Activated CD8-positive, alpha-beta T cell treated with anti-CD3 and anti-CD28 coated beads, Interleukin-2, amount 10 ng/mL, durations not matched to agents 7 days and 5 days (primary cell): ENCODE measurements at regions of chr6 and their contacts with region 1.

Region 1: DNA sequence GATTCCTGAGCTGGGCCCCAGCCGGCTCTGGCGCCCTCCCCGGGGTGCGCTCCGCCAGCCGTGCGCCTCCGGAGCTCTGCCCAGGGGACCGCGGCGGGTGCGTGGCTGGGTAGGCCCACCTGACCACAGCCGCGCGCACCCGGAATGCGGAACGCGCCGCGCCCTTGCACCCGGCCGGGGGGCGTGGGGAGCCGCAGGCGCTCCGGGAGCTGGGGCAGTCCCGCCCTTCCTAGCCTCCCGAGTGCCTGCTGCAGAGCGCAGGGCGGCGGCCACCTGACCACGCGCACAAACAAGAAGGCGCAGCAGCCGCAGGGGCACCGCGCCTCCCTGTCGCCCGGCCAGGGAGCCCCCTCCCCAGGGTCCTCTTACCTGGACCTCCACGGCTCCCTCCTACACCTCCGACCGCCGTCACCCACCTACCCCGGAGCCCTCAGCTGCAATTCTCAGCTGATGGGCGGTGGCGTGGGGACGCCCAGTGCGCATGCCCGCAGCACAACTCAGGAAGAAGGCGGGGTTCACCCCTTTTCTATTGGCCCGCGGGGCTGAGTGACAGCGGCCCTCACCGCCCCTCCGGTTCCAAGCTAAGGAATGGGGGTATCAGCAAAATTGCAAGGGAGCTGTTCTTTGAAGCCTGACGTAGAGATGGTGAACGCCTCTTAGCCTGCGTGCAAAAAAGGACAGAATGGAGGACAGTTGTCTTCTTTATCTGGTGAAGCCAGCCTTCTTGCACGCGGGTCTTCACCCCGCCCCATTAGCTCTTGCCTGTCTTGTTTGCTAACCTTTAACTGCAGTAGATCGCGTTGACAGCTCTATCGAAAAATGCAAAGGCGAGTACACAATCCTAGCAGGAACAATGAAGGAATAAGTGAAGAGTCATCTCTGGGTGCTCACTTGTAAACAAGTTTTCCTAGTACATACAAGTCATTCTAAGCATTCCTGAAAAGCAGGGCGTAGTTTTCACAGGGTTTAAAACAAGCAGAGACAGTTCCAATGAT is at the start of gene STX7:
- DNase-seq: peak; percentile 89
- ATAC-seq: peak; percentile 97
- H3K4me3 Mint-ChIP-seq: peak within 1 kb of the TSS; percentile 94
- H3K27ac Mint-ChIP-seq: peak within 1 kb of the TSS; percentile 89
- H3K4me1 Mint-ChIP-seq: peaks cover 25% of the 10 kb centered on the region
- H3K27me3 Mint-ChIP-seq: peaks cover 15% of the 10 kb centered on the region
- total RNA-seq, gene STX7: 16.0 to 16.4 TPM

Region 2: DNA sequence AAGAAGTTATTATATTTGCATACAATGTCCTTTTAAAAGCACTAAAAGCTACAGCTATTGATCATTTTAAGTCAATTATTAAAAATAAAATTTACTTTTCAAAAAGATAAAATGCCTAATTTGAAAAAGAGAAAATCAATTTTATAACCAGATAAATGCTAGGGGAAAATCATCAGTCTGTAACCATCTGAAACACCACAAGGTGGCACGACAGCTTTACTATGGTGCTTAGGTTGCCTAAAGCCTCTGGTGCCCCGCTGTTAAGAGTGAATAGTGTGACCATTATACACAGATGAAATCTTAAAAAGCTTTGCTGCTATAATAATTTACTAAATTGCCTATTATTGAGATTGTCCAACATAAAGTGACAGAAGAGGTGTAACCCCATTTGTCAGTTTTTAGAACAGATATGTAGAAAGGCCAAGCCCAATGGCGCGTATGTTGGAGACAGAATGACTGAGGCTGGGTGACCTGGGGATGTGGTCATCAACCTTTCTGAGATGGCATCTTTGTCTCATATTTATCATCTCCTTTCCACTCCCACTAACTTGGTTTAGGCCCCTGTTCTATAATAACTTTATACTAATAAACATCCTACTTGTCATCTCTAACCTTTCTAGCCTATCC is 212.5 kb before region 1 on chr6:
- CTCF ChIA-PET with region 1: no interaction called
- POLR2A ChIA-PET with region 1: no interaction called
- DNase-seq: peak; percentile 28
- ATAC-seq: no peak
- H3K4me3 Mint-ChIP-seq: no peak overlapping the region
- H3K27ac Mint-ChIP-seq: no peak overlapping the region
- H3K4me1 Mint-ChIP-seq: no peaks in the 10 kb centered on the region
- H3K27me3 Mint-ChIP-seq: peaks cover 20% of the 10 kb centered on the region

Region 3: GRCh38 chr6:132445201-132445951 is 67.6 kb before region 1 on chr6:
- CTCF ChIA-PET with region 1: no interaction called
- POLR2A ChIA-PET with region 1: no interaction called
- DNase-seq: no peak
- ATAC-seq: no peak
- H3K4me3 Mint-ChIP-seq: no peak overlapping the region
- H3K27ac Mint-ChIP-seq: no peak overlapping the region
- H3K4me1 Mint-ChIP-seq: no peaks in the 10 kb centered on the region
- H3K27me3 Mint-ChIP-seq: no peaks in the 10 kb centered on the region

Region 4: DNA sequence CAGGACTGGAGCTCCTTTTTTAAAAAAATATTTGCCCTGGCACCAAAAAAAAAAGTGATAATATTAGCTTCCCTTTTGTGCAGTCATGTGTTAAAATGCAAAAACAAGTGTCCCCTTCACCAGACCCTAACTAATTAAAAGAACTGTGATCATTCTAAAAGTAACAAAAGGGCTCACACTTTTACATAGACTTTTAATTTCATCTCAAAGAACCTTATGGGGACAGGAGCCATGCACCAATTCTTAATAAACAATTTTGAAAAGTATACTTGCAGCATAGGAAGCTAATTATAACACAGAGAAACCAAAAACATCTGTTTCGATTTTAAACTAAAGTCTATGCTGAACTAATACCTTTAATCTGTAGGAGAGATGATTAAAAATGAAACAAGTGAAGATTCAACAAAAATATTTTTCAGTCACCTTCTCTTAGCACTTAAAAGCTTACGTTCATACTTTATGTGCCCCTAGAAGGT is 17.3 kb before region 1 on chr6:
- CTCF ChIA-PET with region 1: interaction called, 10 read pairs
- POLR2A ChIA-PET with region 1: interaction called, 5 read pairs
- DNase-seq: no peak
- ATAC-seq: no peak
- H3K4me3 Mint-ChIP-seq: no peak overlapping the region
- H3K27ac Mint-ChIP-seq: no peak overlapping the region
- H3K4me1 Mint-ChIP-seq: peaks cover 21% of the 10 kb centered on the region
- H3K27me3 Mint-ChIP-seq: no peaks in the 10 kb centered on the region